Naive thymus-derived CD4-positive, alpha-beta T cell (primary cell): ENCODE measurements at regions of chr6 and their contacts with region 1.

Region 1: GRCh38 chr6:37314487-37315156 is 39.2 kb upstream of the RNF8 start:
- DNase-seq: peak in 6 of 9 donors; percentile 2 to 40 (median 20)
- ATAC-seq: peak; percentile 72
- H3K4me3 ChIP-seq: no peak overlapping the region
- H3K4me3 Mint-ChIP-seq: no peak overlapping the region
- H3K27ac ChIP-seq: no peak overlapping the region
- H3K27ac Mint-ChIP-seq: peak overlapping the region in 4 of 9 donors; percentile 0 to 68 (median 16)
- H3K4me1 ChIP-seq: no peaks in the 10 kb centered on the region
- H3K4me1 Mint-ChIP-seq: peaks cover 0 to 25% (median under 1%) of the 10 kb centered on the region in 7 donors
- H3K27me3 ChIP-seq: no peaks in the 10 kb centered on the region
- H3K27me3 Mint-ChIP-seq: no peaks in the 10 kb centered on the region

Region 2: DNA sequence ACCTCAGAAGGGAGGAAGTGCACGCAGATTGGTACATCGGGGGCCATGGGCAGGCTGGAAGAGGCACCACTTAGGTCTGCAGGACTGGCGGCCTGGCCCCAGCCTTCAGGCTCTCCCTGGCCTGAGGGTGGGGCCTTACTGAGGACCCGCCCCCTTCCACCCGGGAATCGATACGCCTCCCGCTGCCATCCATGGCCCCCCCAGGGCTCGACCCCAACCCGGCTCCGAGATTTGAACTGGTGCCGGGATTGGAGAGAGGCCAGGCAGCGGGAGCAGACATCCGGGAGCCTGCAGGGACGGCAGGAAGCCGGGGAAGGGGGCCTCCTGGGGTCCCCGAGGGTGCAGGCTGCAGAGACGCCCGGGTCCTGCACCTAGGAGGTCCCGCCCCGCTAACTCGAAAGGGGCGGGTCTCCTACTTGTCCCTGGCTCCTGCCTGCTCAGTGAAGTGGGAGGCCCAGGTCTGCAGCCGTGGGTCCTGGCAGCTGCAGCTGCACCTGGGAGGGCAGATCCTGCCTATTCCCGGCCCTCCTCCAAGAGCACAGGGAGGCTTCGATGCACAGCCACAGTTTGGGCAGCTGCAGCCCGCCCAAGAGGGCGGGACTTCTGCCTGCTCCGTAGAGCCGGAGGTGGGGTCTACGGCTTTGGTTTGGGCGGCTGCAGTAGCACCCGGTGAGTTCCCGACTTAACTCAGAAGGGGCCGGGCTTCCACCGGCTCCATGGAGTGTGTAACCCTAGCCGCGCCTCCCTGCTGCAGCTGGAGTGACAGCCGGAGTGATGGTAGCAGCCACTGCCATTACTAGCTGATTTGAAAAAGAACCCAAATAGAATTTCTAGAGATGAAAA is 92.3 kb before region 1 on chr6:
- CTCF ChIA-PET with region 1: no interaction called
- POLR2A ChIA-PET with region 1: no interaction called
- intact Hi-C with region 1: loop called in 1 of 2 experiments (anchors 2 kb)
- DNase-seq: peak; percentile 45 to 74 (median 66)
- ATAC-seq: peak; percentile 94
- H3K4me3 ChIP-seq: peak overlapping the region; percentile 60
- H3K4me3 Mint-ChIP-seq: peak overlapping the region; percentile 77 to 91 (median 86)
- H3K27ac ChIP-seq: peak overlapping the region; percentile 47
- H3K27ac Mint-ChIP-seq: peak overlapping the region in 7 of 9 donors; percentile 13 to 76 (median 68)
- H3K4me1 ChIP-seq: peaks cover 4% of the 10 kb centered on the region in 2 donors
- H3K4me1 Mint-ChIP-seq: peaks cover 12 to 38% (median 13%) of the 10 kb centered on the region in 7 donors
- H3K27me3 ChIP-seq: no peaks in the 10 kb centered on the region
- H3K27me3 Mint-ChIP-seq: no peaks in the 10 kb centered on the region